Caco-2 (cell line): ENCODE measurements at regions of chr17 and their contacts with region 1.

Region 1: DNA sequence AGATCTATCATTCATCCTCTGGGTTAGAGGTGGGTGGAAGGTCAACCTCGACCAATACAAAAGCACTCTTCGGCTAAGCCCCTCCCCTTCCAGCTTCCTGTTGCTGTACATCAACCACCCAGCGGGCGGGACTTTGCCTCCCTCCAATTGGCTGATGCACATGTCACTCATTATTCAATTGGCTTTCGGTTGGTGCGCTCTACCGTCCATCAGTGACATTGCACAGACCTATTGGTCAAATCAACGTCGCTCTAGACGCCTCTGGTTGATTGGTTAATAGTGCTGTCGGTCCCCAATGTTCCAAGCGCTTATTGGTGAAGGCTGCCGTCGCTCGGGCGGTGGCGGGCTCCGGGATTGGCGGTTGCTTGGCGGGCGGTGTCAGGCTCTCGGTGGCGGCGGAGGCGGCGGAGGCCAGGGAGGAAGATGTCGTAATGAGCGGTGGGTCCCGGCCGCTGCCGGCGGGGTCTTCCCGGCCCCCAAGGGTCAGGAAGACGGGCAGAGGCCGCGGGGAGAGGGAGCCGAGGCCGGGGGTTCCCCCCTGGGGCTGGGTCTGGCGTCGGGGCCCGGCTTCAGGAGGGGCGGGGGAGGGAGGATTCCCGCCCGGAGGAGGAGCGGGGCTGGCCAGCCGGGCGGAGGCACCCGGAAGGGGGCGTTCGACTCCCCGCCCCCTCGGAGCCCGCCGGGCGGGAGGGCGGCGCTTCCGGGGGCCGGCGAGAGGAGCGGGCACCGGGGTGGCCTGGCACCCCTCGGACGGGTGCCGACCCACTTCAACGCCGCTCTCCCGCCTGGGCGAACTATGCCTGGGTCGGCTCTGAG is at the start of gene SP2:
- DNase-seq: peak; percentile 100
- H3K4me3 ChIP-seq: peak within 1 kb of the TSS; percentile 60
- H3K4me3 Mint-ChIP-seq: peak within 1 kb of the TSS; percentile 75
- H3K27ac Mint-ChIP-seq: peak within 1 kb of the TSS; percentile 91
- H3K4me1 ChIP-seq: peaks cover 10% of the 10 kb centered on the region
- H3K4me1 Mint-ChIP-seq: peaks cover 23% of the 10 kb centered on the region
- H3K27me3 ChIP-seq: no peaks in the 10 kb centered on the region
- H3K27me3 Mint-ChIP-seq: peaks cover 2% of the 10 kb centered on the region
- CTCF ChIP-seq: peak; percentile 22 to 39
- total RNA-seq, gene SP2: 24.8 and 25.2 TPM in 2 replicates

Region 2: GRCh38 chr17:47763913-47764582 is 132.0 kb before region 1 on chr17:
- CTCF ChIA-PET with region 1: no interaction called
- POLR2A ChIA-PET with region 1: interaction called, 10 read pairs
- intact Hi-C with region 1: no loop called
- DNase-seq: no peak
- H3K4me3 ChIP-seq: no peak overlapping the region
- H3K4me3 Mint-ChIP-seq: no peak overlapping the region
- H3K27ac Mint-ChIP-seq: no peak overlapping the region
- H3K4me1 ChIP-seq: no peaks in the 10 kb centered on the region
- H3K4me1 Mint-ChIP-seq: no peaks in the 10 kb centered on the region
- H3K27me3 ChIP-seq: no peaks in the 10 kb centered on the region
- H3K27me3 Mint-ChIP-seq: peaks cover 19% of the 10 kb centered on the region
- CTCF ChIP-seq: no peak

Region 3: DNA sequence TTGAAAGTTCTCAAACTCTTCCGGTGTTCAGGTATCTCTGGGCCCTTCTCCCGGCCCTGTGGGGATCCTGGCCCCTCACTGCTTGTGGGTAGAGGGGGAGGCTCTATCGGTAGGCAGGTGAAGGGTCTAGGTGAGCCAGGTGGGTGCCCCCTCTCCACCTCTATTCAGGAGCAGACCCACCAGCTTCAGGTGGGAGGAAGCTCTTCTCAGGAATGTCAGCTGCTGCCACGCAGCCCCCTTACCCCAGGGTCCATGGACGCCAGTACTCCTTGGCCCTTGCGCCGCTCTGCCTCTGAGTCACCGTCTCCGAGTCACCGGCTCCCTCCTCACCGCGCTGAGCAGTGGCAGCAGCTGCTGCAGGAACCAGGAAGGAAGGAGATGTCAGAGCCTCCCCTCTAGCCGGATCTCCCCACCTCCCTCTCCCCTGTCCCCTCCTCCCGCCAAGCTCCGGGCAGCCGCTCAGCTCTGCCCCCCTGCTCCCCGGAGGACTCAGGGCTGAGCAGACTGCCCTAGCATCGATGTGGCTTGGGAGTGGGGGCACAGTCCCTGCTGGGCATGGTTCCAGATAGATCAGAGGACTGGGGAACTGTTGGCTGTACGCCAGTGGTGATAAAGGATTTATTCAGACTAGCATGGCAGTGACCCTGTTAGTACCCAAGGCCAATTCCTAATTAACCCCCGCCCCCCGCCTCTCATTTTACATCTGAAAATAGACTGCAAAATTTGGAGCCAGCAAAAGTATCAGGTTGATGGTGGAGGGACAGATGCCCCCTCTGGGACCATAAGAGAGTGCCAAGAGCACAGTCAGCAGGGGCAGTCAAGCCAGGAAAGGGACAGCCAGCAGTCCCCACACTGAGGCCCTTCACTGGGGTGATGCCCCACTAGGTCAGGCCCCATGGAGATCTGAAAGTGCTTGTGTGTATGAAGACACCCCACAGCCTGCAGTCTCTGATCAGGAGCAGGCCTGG is 74.4 kb before region 1 on chr17 and contains the start of gene OSBPL7:
- CTCF ChIA-PET with region 1: interaction called, 17 read pairs
- POLR2A ChIA-PET with region 1: interaction called, 14 read pairs
- intact Hi-C with region 1: no loop called
- DNase-seq: peak; percentile 92 to 95
- H3K4me3 ChIP-seq: peak within 1 kb of the TSS; percentile 75
- H3K4me3 Mint-ChIP-seq: peak within 1 kb of the TSS; percentile 98
- H3K27ac Mint-ChIP-seq: peak within 1 kb of the TSS; percentile 92
- H3K4me1 ChIP-seq: peaks cover 9% of the 10 kb centered on the region
- H3K4me1 Mint-ChIP-seq: peaks cover 18% of the 10 kb centered on the region
- H3K27me3 ChIP-seq: no peaks in the 10 kb centered on the region
- H3K27me3 Mint-ChIP-seq: no peaks in the 10 kb centered on the region
- CTCF ChIP-seq: peak in 1 of 2 experiments; percentile 86
- total RNA-seq, gene OSBPL7: 46.8 and 48.3 TPM in 2 replicates

Region 4: GRCh38 chr17:47850692-47851573 is 45.1 kb before region 1 on chr17 and contains the start of gene SP6:
- CTCF ChIA-PET with region 1: interaction called, 904 read pairs
- POLR2A ChIA-PET with region 1: interaction called, 18 read pairs
- intact Hi-C with region 1: no loop called
- DNase-seq: peak; percentile 98 to 99
- H3K4me3 ChIP-seq: peak within 1 kb of the TSS; percentile 56
- H3K4me3 Mint-ChIP-seq: peak within 1 kb of the TSS; percentile 90
- H3K27ac Mint-ChIP-seq: peak within 1 kb of the TSS; percentile 77
- H3K4me1 ChIP-seq: peaks cover 12% of the 10 kb centered on the region
- H3K4me1 Mint-ChIP-seq: peaks cover 23% of the 10 kb centered on the region
- H3K27me3 ChIP-seq: no peaks in the 10 kb centered on the region
- H3K27me3 Mint-ChIP-seq: peaks cover 12% of the 10 kb centered on the region
- CTCF ChIP-seq: peak; percentile 31 to 57
- total RNA-seq, gene SP6: 20.6 and 25.0 TPM in 2 replicates

Region 5: GRCh38 chr17:47949136-47949759 is 53.2 kb after region 1 on chr17:
- CTCF ChIA-PET with region 1: interaction called, 12 read pairs
- POLR2A ChIA-PET with region 1: interaction called, 13 read pairs
- intact Hi-C with region 1: loop called (anchors 1 kb)
- DNase-seq: peak; percentile 96 to 99
- H3K4me3 ChIP-seq: peak overlapping the region; percentile 1; the same call in 1 of the 2 replicates
- H3K4me3 Mint-ChIP-seq: peak overlapping the region; percentile 55
- H3K27ac Mint-ChIP-seq: peak overlapping the region; percentile 58
- H3K4me1 ChIP-seq: peaks cover 14% of the 10 kb centered on the region
- H3K4me1 Mint-ChIP-seq: peaks cover 28% of the 10 kb centered on the region
- H3K27me3 ChIP-seq: no peaks in the 10 kb centered on the region
- H3K27me3 Mint-ChIP-seq: no peaks in the 10 kb centered on the region
- CTCF ChIP-seq: peak; percentile 100

Region 6: GRCh38 chr17:47970704-47971463 is 74.8 kb after region 1 on chr17 and contains the start of gene CDK5RAP3:
- CTCF ChIA-PET with region 1: interaction called, 36 read pairs
- POLR2A ChIA-PET with region 1: interaction called, 43 read pairs
- intact Hi-C with region 1: loop called (anchors 1 kb)
- DNase-seq: peak; percentile 100
- H3K4me3 ChIP-seq: peak within 1 kb of the TSS; percentile 72
- H3K4me3 Mint-ChIP-seq: peak within 1 kb of the TSS; percentile 94
- H3K27ac Mint-ChIP-seq: peak within 1 kb of the TSS; percentile 92
- H3K4me1 ChIP-seq: peaks cover 40% of the 10 kb centered on the region
- H3K4me1 Mint-ChIP-seq: peaks cover 30% of the 10 kb centered on the region
- H3K27me3 ChIP-seq: no peaks in the 10 kb centered on the region
- H3K27me3 Mint-ChIP-seq: no peaks in the 10 kb centered on the region
- CTCF ChIP-seq: peak; percentile 99 to 100
- total RNA-seq, gene CDK5RAP3: 425 and 427 TPM in 2 replicates

Region 7: GRCh38 chr17:48131216-48131824 is 235.3 kb after region 1 on chr17:
- CTCF ChIA-PET with region 1: no interaction called
- POLR2A ChIA-PET with region 1: no interaction called
- intact Hi-C with region 1: no loop called
- DNase-seq: peak; percentile 89 to 95
- H3K4me3 ChIP-seq: no peak overlapping the region
- H3K4me3 Mint-ChIP-seq: no peak overlapping the region
- H3K27ac Mint-ChIP-seq: no peak overlapping the region
- H3K4me1 ChIP-seq: no peaks in the 10 kb centered on the region
- H3K4me1 Mint-ChIP-seq: no peaks in the 10 kb centered on the region
- H3K27me3 ChIP-seq: no peaks in the 10 kb centered on the region
- H3K27me3 Mint-ChIP-seq: peaks cover 4% of the 10 kb centered on the region
- CTCF ChIP-seq: peak; percentile 99